ENCODE measurements at regions of chr15 and their contacts with region 1.

Region 1: GRCh38 chr15:32774022-32774421 is 56.2 kb downstream of the GREM1 start:
- DNase-seq: peak; percentile 97
- H3K4me3 ChIP-seq: no peak overlapping the region
- H3K27me3 ChIP-seq: no peaks in the 10 kb centered on the region
- CTCF ChIP-seq: no peak

Region 2: DNA sequence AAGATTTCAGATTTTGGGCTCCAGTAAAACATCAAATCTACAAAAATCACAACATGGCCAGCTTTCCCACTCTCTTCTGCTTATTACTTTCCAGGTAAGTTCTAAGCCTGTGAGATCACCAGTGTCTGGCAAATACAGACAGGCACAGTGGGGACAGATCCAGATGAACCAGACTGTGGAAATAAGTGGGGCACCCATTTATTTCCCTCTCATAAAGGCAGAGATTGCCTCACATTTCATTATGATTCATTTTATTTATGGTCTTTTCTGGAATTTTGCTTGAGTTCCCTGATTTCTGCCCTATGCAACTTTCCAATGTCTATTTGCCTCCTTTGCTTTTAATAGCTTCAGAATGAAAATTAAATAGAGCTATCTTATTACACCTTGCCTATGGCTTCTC is 10.6 kb after region 1 on chr15:
- CTCF ChIA-PET with region 1: interaction called, 10 read pairs
- POLR2A ChIA-PET with region 1: no interaction called
- DNase-seq: peak; percentile 32
- H3K4me3 ChIP-seq: no peak overlapping the region
- H3K27me3 ChIP-seq: no peaks in the 10 kb centered on the region
- CTCF ChIP-seq: no peak